ENCODE measurements at regions of chr2 and their contacts with region 1.

Region 1: DNA sequence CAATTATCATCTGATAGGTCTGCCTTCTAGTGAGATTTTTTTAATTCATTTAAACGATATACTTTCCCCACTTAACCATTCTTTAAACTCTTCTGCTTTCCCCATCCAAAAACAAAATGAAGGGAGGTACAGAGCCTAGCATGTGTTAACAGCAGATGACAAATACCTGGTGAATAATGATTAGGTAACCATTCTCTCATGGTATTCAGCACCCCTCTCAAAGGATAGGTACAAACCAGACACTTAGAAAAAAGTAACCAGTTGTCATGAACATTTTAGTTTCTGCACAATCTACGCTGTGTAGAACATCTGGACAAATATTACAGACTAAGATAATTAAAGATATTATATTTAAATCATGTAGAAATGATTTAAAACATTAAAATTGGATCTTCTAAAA is 56.3 kb downstream of the DNAH7 start:
- DNase-seq: no peak
- ATAC-seq: no peak
- H3K4me3 ChIP-seq: no peak overlapping the region
- H3K27ac ChIP-seq: no peak overlapping the region
- H3K4me1 ChIP-seq: no peaks in the 10 kb centered on the region
- H3K27me3 ChIP-seq: no peaks in the 10 kb centered on the region
- CTCF ChIP-seq: no peak
- EP300 ChIP-seq: no peak
- POLR2A ChIP-seq: no peak
- RAD21 ChIP-seq: no peak

Region 2: GRCh38 chr2:194385376-194385775 is 1626.9 kb before region 1 on chr2:
- CTCF ChIA-PET with region 1: no interaction called
- POLR2A ChIA-PET with region 1: no interaction called
- in situ Hi-C with region 1: no loop called
- intact Hi-C with region 1: loop called (anchors 5 kb)
- DNase-seq: no peak
- ATAC-seq: no peak
- H3K4me3 ChIP-seq: no peak overlapping the region
- H3K27ac ChIP-seq: no peak overlapping the region
- H3K4me1 ChIP-seq: no peaks in the 10 kb centered on the region
- H3K27me3 ChIP-seq: no peaks in the 10 kb centered on the region
- CTCF ChIP-seq: no peak
- EP300 ChIP-seq: no peak
- POLR2A ChIP-seq: no peak
- RAD21 ChIP-seq: no peak

Measured in HepG2 (cell line).